Breast epithelium (tissue), 4 donors: ENCODE measurements at regions of chr12 and their contacts with region 1.

Region 1: DNA sequence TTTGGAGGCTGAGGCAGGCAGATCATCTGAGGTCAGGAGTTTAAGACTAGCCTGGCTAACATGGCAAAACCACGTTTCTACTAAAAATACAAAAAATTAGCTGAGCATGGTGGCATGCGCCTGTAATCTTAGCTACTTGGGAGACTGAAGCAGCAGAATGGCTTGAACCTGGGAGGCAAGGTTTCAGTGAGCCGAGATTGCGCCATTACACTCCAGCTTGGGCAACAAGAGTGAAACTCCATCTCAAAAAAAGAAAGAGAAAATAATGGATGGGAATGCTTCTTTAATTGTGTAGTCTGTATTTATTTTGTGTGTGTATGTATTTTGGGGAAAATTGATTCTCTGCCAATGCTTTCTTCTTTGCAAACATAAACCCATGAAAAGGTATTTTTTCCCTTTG is 32.5 kb downstream of the SRGAP1 start:
- DNase-seq: no peak
- H3K4me3 ChIP-seq: no peak overlapping the region
- H3K27ac ChIP-seq: no peak overlapping the region
- H3K4me1 ChIP-seq: no peaks in the 10 kb centered on the region
- H3K27me3 ChIP-seq: no peaks in the 10 kb centered on the region
- CTCF ChIP-seq: no peak
- POLR2A ChIP-seq: no peak

Region 2: DNA sequence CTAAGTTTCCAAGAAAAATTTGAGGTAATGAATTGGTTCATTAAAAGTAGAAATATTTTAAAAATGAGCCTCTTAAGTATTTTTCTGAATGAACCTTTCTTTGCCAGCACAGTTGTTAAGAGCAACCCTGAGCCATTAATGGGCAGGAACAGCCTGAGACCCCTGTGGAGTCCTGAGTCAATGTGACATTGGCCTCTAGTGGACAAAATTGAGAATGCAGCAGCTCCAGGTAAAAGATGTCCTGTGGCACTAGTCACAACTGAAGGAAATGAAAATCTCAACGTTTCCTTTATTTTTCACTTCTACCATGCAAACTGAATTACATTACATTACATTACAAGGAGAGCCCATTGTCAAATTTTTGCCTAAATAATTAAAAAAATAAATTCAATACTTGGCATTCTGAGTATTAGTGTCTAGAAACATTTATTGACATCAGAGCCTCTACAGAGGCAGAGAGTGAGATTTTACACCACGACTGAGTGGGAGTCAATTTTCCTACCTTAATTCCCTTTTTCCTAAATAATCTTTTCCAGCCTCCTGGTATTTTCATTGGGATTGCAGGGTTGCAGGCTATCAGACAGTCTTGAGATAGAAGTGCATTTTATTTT is 1077.7 kb before region 1 on chr12:
- intact Hi-C with region 1: no loop called
- DNase-seq: peak in 1 of 2 donors; percentile 35
- H3K4me3 ChIP-seq: no peak overlapping the region
- H3K27ac ChIP-seq: no peak overlapping the region
- H3K4me1 ChIP-seq: no peaks in the 10 kb centered on the region
- H3K27me3 ChIP-seq: no peaks in the 10 kb centered on the region
- CTCF ChIP-seq: peak; percentile 89 to 97 (median 94)
- POLR2A ChIP-seq: no peak

Region 3: GRCh38 chr12:64311877-64312276 is 434.9 kb after region 1 on chr12:
- intact Hi-C with region 1: loop called (anchors 5 kb)
- DNase-seq: no peak
- H3K4me3 ChIP-seq: no peak overlapping the region
- H3K27ac ChIP-seq: no peak overlapping the region
- H3K4me1 ChIP-seq: no peaks in the 10 kb centered on the region
- H3K27me3 ChIP-seq: no peaks in the 10 kb centered on the region
- CTCF ChIP-seq: no peak
- POLR2A ChIP-seq: no peak